ENCODE measurements at regions of chr5 and their contacts with region 1.

Region 1: GRCh38 chr5:157511651-157512644 is 51.9 kb downstream of the NIPAL4 start:
- DNase-seq: peak; percentile 95 to 98 (median 97)
- ATAC-seq: peak; percentile 96
- H3K4me3 ChIP-seq: no peak overlapping the region
- H3K27ac ChIP-seq: peak overlapping the region; percentile 87
- H3K4me1 ChIP-seq: peaks cover 11% of the 10 kb centered on the region
- H3K27me3 ChIP-seq: no peaks in the 10 kb centered on the region

Region 2: GRCh38 chr5:157449011-157449723 is 62.8 kb before region 1 on chr5:
- intact Hi-C with region 1: no loop called
- DNase-seq: peak; percentile 76 to 92 (median 92)
- ATAC-seq: peak; percentile 89 to 95
- H3K4me3 ChIP-seq: no peak overlapping the region
- H3K27ac ChIP-seq: peak overlapping the region; percentile 86
- H3K4me1 ChIP-seq: no peaks in the 10 kb centered on the region
- H3K27me3 ChIP-seq: no peaks in the 10 kb centered on the region

Region 3: DNA sequence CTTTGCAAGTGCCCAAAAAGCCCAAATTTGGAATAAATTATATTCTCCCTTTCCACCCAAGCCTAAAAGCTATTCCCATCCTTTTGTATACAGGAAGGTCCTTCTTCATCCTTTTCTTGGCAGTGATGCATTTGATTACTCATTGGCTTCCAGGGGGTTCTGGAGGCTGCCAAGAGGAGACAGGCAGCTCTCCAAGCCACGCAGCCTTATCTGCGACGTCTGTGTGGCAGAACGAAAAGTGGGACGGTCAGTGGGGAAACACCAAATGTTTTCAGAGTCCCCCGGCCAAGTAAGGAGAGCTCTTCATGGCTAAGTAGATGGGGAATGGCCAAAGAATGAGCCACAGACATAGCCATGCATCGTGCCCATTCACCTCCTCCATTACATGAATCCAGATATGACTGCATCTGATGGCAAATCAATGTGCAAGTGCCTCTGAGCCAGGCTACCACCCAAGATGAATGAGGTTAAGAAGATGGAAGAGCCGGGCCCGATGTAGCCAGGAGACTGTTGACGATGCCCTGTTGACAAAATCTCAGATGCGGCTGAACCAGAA is 51.5 kb after region 1 on chr5:
- intact Hi-C with region 1: loop called in 1 of 4 experiments (anchors 2 kb)
- DNase-seq: peak; percentile 78 to 84 (median 80)
- ATAC-seq: peak; percentile 67 to 79
- H3K4me3 ChIP-seq: no peak overlapping the region
- H3K27ac ChIP-seq: peak overlapping the region; percentile 93
- H3K4me1 ChIP-seq: peaks cover 23% of the 10 kb centered on the region
- H3K27me3 ChIP-seq: no peaks in the 10 kb centered on the region

Region 4: GRCh38 chr5:157575381-157576020 is 63.6 kb after region 1 on chr5 and contains the start of gene ADAM19:
- intact Hi-C with region 1: loop called in 1 of 4 experiments (anchors 10 kb)
- DNase-seq: peak; percentile 63 to 89 (median 86)
- ATAC-seq: peak; percentile 93
- H3K4me3 ChIP-seq: peak within 1 kb of the TSS; percentile 43
- H3K27ac ChIP-seq: peak within 1 kb of the TSS; percentile 56
- H3K4me1 ChIP-seq: peaks cover 9% of the 10 kb centered on the region
- H3K27me3 ChIP-seq: no peaks in the 10 kb centered on the region
- total RNA-seq, gene ADAM19: 21.7 to 60.2 (median 24.5) TPM